ENCODE measurements at regions of chr1 and their contacts with region 1.

Region 1: GRCh38 chr1:8702850-8703810 is 114.3 kb downstream of the RERE start:
- DNase-seq: peak; percentile 88
- H3K4me3 ChIP-seq: peak overlapping the region; percentile 45 to 71 (median 63)
- H3K27ac ChIP-seq: peak overlapping the region; percentile 71
- H3K4me1 ChIP-seq: peaks cover 20% of the 10 kb centered on the region
- H3K27me3 ChIP-seq: no peaks in the 10 kb centered on the region
- CTCF ChIP-seq: no peak

Region 2: GRCh38 chr1:8015036-8015808 is 687.9 kb before region 1 on chr1:
- CTCF ChIA-PET with region 1: no interaction called
- dilution Hi-C with region 1: no loop called
- in situ Hi-C with region 1: loop called in 1 of 2 experiments (anchors 25 kb)
- intact Hi-C with region 1: no loop called
- DNase-seq: peak; percentile 78
- H3K4me3 ChIP-seq: no peak overlapping the region
- H3K27ac ChIP-seq: peak overlapping the region; percentile 30
- H3K4me1 ChIP-seq: peaks cover 58% of the 10 kb centered on the region
- H3K27me3 ChIP-seq: no peaks in the 10 kb centered on the region
- CTCF ChIP-seq: peak; percentile 60 to 67

Region 3: DNA sequence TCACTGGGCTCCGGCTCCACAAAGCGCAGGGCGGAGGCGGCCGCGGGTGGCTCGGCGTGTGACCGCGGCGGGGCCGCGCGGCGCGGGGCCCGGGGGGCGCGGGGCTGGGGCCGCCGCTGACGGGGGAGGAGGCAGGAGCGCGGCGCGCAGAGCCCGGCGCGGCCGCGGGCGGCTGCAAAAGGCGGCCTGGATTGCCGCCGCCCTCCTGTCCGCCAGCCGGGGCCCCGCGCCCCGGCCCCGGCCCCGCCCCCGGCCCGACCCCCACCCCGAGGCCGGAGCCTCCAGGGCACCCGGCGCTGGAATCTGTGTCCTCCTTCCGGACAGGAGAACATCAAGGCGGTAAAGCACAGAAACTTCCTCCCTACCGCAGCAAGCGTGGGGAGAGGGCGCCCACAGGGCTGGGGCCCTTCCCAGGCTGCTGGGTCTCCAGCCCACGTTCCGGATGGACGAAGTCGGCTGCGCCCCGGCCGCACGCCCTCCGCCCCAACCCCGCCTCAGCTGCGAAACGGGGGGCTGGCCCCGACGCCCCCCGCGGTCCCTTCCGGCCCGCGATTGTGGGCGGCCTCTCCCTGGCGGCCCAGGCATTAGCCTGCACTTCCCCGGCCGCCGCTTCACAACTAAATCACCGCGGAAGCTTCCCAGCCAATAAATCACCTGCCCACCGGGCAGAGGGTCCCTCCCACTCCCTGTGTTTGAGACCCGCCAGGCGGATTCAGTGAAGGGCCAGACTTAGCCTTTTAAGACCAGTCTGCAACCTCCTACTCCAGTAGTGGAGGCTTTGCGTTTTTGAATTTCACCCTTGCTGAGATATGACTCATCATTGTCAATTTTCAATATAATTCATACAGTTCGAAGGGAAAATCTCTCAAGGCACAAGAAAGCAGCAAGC is 279.2 kb before region 1 on chr1:
- CTCF ChIA-PET with region 1: no interaction called
- dilution Hi-C with region 1: no loop called
- in situ Hi-C with region 1: no loop called
- intact Hi-C with region 1: loop called (anchors 2 kb)
- DNase-seq: peak; percentile 51
- H3K4me3 ChIP-seq: peak overlapping the region; percentile 71 to 88 (median 77)
- H3K27ac ChIP-seq: peak overlapping the region; percentile 79
- H3K4me1 ChIP-seq: peaks cover 14% of the 10 kb centered on the region
- H3K27me3 ChIP-seq: no peaks in the 10 kb centered on the region
- CTCF ChIP-seq: no peak

Region 4: DNA sequence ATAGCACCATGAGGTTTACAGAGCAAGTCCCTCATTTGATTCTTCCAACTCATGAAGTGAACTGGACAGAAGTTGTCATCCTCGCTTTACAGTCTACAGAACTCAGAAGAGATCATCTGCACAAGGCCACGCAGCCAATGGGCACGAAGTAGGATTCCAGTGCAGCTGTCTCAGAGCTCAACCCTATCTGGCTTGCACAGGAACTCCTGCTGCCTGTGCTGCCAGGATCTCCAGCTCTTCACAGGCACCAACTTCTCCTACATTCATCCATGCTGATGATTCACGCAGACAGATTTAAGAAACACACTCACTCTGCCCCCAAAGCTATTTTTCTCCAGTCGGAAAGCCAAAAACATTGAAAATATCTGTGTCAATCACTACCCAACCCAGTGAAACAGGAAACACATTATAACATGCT is 42.7 kb before region 1 on chr1:
- CTCF ChIA-PET with region 1: no interaction called
- dilution Hi-C with region 1: no loop called
- in situ Hi-C with region 1: no loop called
- intact Hi-C with region 1: loop called (anchors 1 kb)
- DNase-seq: peak; percentile 77
- H3K4me3 ChIP-seq: no peak overlapping the region
- H3K27ac ChIP-seq: peak overlapping the region; percentile 60
- H3K4me1 ChIP-seq: peaks cover 29% of the 10 kb centered on the region
- H3K27me3 ChIP-seq: no peaks in the 10 kb centered on the region
- CTCF ChIP-seq: no peak

Region 5: DNA sequence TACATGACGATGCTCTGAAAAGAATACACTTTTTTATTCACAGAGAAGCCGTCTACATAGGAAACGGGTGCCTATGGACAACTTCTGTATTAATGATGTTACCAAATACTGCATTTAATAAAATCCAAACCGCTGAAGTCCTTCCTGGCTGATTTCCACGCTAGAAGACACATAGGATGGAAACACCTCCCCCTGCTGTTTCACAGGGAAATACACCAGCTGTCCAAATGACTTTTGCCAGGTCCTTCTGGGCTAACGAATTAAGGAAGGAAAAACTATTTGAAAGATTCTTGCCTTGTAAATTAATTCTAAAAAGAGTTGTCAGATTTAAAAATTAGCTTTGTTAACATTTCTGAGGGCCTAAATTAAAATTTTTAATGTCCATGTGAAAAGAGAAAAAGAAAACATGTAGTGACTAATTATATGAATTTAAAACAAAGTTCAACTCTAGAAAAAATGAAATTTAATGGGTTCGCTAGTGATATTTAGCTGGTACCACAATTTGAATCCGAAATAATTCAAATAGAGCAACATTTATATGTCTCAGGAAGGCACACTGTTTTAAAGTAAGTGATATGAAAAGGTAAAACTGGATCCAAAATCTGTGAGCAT is 31.7 kb before region 1 on chr1:
- CTCF ChIA-PET with region 1: no interaction called
- dilution Hi-C with region 1: no loop called
- in situ Hi-C with region 1: no loop called
- intact Hi-C with region 1: loop called (anchors 2 kb)
- DNase-seq: no peak
- H3K4me3 ChIP-seq: no peak overlapping the region
- H3K27ac ChIP-seq: no peak overlapping the region
- H3K4me1 ChIP-seq: peaks cover 18% of the 10 kb centered on the region
- H3K27me3 ChIP-seq: no peaks in the 10 kb centered on the region
- CTCF ChIP-seq: peak; percentile 77 to 81

Region 6: GRCh38 chr1:8689431-8690252 is 13.5 kb before region 1 on chr1:
- CTCF ChIA-PET with region 1: interaction called, 10 read pairs
- dilution Hi-C with region 1: no loop called
- in situ Hi-C with region 1: no loop called
- intact Hi-C with region 1: no loop called
- DNase-seq: no peak
- H3K4me3 ChIP-seq: no peak overlapping the region
- H3K27ac ChIP-seq: no peak overlapping the region
- H3K4me1 ChIP-seq: no peaks in the 10 kb centered on the region
- H3K27me3 ChIP-seq: no peaks in the 10 kb centered on the region
- CTCF ChIP-seq: no peak

Region 7: DNA sequence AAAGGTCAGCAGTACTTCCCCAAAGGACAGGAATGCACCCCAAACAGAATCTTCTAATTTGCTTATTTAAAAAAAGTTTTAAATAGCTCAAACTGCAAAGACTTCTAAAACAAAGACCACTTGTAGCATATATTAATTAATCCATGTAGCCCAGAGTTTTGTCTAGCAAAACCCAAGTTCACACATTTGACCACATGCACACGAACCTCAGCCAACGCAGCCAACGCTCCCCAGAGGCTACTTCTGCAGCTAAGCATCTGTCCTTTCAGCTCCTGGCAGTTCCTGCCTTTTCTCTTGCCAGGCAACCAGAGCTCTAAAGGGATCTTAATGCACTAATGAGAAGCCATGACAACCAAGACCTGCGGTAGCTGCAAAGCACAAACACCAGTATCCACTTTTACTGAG is 24.7 kb after region 1 on chr1:
- CTCF ChIA-PET with region 1: interaction called, 4 read pairs
- dilution Hi-C with region 1: no loop called
- in situ Hi-C with region 1: no loop called
- intact Hi-C with region 1: loop called (anchors 1 kb)
- DNase-seq: no peak
- H3K4me3 ChIP-seq: no peak overlapping the region
- H3K27ac ChIP-seq: no peak overlapping the region
- H3K4me1 ChIP-seq: peaks cover 5% of the 10 kb centered on the region
- H3K27me3 ChIP-seq: no peaks in the 10 kb centered on the region
- CTCF ChIP-seq: no peak

Measured in mammary epithelial cell (primary cell).